WTC11 (cell line): ENCODE measurements at regions of chr16 and their contacts with region 1.

Region 1: DNA sequence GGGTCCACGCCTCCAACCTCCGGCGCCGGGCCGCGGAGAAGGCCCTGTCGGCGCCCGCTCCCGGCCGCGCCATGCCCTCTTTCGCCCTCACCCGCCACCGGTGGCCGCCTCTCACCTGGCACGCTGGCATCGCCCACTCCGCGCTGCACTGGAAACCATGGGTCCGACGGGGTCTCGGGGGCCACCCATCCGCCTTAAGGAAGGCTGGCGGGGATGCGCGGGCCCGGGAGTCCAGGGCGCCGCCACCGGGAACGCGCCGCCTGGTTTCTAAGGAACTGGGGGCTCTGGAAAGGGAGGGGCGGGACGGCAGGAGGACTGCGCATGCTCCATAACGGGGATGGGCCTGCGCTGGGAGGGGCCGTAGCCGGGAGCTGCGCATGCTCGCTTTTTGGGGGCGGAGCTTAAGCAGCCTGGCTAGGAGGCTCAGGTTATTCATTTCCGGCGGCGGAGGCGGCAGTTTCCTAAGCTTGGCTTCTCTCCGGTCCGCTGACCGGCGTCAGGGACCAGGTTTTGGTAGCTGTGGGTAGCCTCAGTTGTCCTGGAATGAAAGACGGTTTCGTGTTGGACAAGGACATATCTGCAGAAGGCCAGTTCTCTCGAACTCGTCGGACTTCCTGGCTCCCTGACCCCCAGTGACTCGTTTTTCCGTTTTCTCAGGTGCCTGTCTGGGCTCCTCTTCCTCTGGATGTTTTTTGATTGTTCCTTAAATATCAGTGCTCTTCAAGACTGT is at the start of gene GFOD2:
- DNase-seq: peak; percentile 99
- ATAC-seq: peak; percentile 94
- H3K4me3 Mint-ChIP-seq: peak within 1 kb of the TSS; percentile 91
- H3K27ac Mint-ChIP-seq: peak within 1 kb of the TSS; percentile 82
- H3K4me1 Mint-ChIP-seq: peaks cover 21% of the 10 kb centered on the region
- H3K27me3 Mint-ChIP-seq: no peaks in the 10 kb centered on the region
- CTCF ChIP-seq: no peak
- total RNA-seq, gene GFOD2: 19.3 to 29.5 TPM (median 22.8 TPM) in 3 replicates

Region 2: DNA sequence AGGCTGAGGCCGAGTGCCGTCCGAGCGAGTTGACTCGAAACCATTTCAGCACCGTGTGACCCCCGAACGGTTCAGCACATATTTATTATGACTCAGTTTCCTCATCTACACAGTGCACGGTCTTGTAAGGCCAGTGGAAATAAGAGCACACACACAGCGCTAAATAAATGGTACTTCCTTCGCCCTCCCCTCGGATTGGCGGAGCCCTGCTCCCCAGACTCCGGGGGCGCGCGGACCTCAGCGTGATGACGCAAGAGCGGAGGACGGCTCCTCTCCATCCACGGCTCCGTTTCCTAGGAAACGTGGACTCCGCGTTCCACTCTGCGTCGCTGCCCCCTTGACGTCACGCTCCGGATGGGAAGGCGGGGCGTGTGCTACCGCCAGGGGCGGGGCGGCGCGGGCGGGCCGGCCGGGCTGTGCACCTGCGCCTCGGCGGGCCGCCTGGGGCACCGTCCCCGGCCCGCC is 58.6 kb before region 1 on chr16 and contains the start of gene PARD6A:
- CTCF ChIA-PET with region 1: interaction called, 12 read pairs
- POLR2A ChIA-PET with region 1: no interaction called
- DNase-seq: peak; percentile 96
- ATAC-seq: peak; percentile 72
- H3K4me3 Mint-ChIP-seq: peak within 1 kb of the TSS; percentile 91
- H3K27ac Mint-ChIP-seq: peak within 1 kb of the TSS; percentile 98
- H3K4me1 Mint-ChIP-seq: peaks cover 19% of the 10 kb centered on the region
- H3K27me3 Mint-ChIP-seq: peaks cover 5% of the 10 kb centered on the region
- CTCF ChIP-seq: no peak
- total RNA-seq, gene PARD6A: 17.1 to 18.5 TPM (median 17.4 TPM) in 3 replicates

Region 3: GRCh38 chr16:67667817-67668494 is 51.3 kb before region 1 on chr16:
- CTCF ChIA-PET with region 1: interaction called, 14 read pairs
- POLR2A ChIA-PET with region 1: no interaction called
- DNase-seq: peak; percentile 82
- ATAC-seq: peak; percentile 66
- H3K4me3 Mint-ChIP-seq: peak overlapping the region; percentile 84; the same call in 1 of the 2 replicates
- H3K27ac Mint-ChIP-seq: no peak overlapping the region
- H3K4me1 Mint-ChIP-seq: peaks cover 11% of the 10 kb centered on the region
- H3K27me3 Mint-ChIP-seq: peaks cover 6% of the 10 kb centered on the region
- CTCF ChIP-seq: no peak

Region 4: GRCh38 chr16:67806428-67807147 is 87.4 kb after region 1 on chr16 and contains the starts of genes RANBP10 and TSNAXIP1:
- CTCF ChIA-PET with region 1: interaction called, 6 read pairs
- POLR2A ChIA-PET with region 1: interaction called, 11 read pairs
- DNase-seq: peak; percentile 98
- ATAC-seq: peak; percentile 98
- H3K4me3 Mint-ChIP-seq: peak within 1 kb of the TSS; percentile 92
- H3K27ac Mint-ChIP-seq: peak within 1 kb of the TSS; percentile 92
- H3K4me1 Mint-ChIP-seq: peaks cover 5% of the 10 kb centered on the region
- H3K27me3 Mint-ChIP-seq: no peaks in the 10 kb centered on the region
- CTCF ChIP-seq: no peak
- total RNA-seq, gene RANBP10: 14.0 to 16.9 TPM (median 16.1 TPM) in 3 replicates
- total RNA-seq, gene TSNAXIP1: 0.41 to 1.7 TPM (median 0.48 TPM) in 3 replicates